Activated T-helper 2 cell treated with anti-CD3 and anti-CD28 coated beads, Interferon-gamma antibody, Interleukin-2, Interleukin-4, amounts not matched to agents 10 μg/mL and 5 μg/mL and 100 μg/mL, durations not matched to agents 14 hours and 24 hours and 36 hours (primary cell): ENCODE measurements at regions of chr17 and their contacts with region 1.

Region 1: DNA sequence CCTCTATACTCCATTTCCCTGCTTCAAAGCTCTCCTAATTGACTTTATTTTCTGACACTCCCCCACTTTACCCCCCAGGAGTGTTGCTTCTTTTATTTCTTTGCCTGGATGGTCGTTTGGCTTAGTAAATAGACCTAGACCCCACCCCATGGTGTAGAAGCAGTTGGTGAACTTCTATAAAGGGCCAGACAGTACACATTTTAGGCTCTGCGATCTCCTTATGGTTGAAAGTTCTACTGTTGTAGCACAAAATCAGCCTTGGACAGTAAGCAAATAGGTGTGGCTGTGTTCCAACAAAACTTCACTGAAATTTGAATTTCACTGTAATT is 31.9 kb downstream of the ZNF287 start:
- DNase-seq: no peak
- H3K4me3 Mint-ChIP-seq: peak overlapping the region; percentile 90
- H3K27ac Mint-ChIP-seq: no peak overlapping the region
- H3K4me1 Mint-ChIP-seq: peaks cover 15% of the 10 kb centered on the region
- H3K27me3 Mint-ChIP-seq: peaks cover 2% of the 10 kb centered on the region

Region 2: GRCh38 chr17:16438557-16439302 is 98.4 kb before region 1 on chr17:
- intact Hi-C with region 1: loop called (anchors 5 kb)
- DNase-seq: peak; percentile 95
- H3K4me3 Mint-ChIP-seq: peak overlapping the region; percentile 98
- H3K27ac Mint-ChIP-seq: peak overlapping the region; percentile 94
- H3K4me1 Mint-ChIP-seq: peaks cover 27% of the 10 kb centered on the region
- H3K27me3 Mint-ChIP-seq: no peaks in the 10 kb centered on the region

Region 3: DNA sequence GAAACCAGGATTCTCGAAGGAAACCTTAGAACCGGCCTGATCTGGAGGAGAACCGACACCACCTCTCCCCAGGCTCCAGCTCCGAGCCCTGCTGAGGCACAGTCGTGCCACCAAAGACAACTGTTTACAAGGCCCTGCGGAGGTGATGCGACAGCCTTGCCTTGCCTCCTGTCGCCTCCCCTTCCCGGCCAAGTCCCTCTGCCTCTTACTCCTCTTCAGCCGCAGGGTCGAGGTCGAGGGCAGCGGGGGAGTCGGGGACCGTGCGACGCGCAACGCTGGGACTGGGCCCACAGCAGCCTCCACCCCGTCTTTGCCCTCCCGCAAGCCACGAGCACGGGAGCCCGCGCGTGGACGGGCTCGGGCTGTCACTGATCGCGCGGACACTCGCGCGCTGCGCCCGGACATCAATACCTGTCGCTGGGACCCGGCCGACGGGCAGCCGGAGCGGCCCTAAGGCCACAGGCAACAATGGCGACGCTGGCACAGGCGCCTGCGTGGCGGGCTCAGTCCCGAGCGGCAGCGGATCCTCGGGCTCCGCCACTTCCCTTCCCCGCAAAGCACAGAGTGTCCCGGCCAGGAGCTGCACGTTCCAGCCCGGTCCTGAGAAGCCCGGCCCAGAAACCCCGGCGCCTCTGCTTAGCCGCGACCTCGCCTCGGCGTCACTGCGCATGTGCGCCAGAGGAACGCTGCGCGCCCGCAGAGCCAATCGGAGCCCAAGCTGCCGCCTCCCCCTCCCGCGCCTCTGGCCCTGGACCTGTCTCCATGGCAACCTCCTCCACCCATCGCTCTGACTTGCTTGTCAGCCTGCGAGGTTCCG is 31.7 kb after region 1 on chr17 and contains the start of gene ZNF287:
- intact Hi-C with region 1: loop called (anchors 1 kb)
- DNase-seq: peak; percentile 90
- H3K4me3 Mint-ChIP-seq: peak within 1 kb of the TSS; percentile 78
- H3K27ac Mint-ChIP-seq: peak within 1 kb of the TSS; percentile 43
- H3K4me1 Mint-ChIP-seq: peaks cover 2% of the 10 kb centered on the region
- H3K27me3 Mint-ChIP-seq: no peaks in the 10 kb centered on the region
- total RNA-seq, gene ZNF287: 6.0 and 7.9 TPM in 2 replicates

Region 4: DNA sequence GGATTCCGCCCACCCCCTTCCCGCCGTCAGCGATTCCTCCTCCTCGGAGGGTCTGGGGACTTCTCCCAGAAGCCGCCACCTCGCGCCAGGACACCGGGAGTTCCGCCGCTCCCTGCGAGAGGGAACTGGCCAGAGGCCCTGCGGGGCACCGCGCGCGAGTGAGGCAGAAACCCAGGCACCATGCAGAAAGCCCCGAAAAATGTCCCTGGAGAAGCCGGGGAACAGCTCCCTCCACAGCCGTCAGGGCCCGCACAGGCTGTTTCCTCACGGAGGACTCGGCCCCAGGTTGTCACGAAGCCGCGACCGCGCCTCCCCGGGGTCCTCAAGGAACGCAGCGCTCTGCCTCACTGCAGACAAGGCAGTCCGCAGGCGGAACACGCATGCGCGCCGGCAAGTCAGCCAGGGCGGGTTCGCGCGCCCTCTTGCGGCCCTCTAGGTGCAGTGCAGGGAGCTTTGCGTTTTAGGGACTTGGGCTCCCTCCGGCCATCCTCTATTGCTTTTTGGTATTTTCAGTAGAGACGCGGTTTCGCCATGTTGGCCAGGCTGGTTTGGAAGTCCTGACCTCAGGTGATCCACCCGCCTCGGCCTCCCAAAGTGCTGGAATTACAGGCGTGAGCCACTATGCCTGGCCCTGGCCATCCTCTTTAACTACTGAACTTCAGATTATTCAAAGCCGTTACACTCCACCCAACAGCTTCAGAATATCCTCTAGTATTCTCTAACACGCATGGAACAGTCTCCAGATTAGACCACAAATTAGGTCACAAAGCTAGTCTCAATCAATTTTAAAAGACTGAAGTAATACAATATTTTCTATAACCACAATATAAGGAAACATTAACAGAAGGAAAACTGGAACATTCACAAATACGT is 52.2 kb after region 1 on chr17:
- intact Hi-C with region 1: loop called (anchors 1 kb)
- DNase-seq: peak; percentile 87
- H3K4me3 Mint-ChIP-seq: peak overlapping the region; percentile 66
- H3K27ac Mint-ChIP-seq: no peak overlapping the region
- H3K4me1 Mint-ChIP-seq: peaks cover 5% of the 10 kb centered on the region
- H3K27me3 Mint-ChIP-seq: peaks cover 49% of the 10 kb centered on the region

Region 5: GRCh38 chr17:16653209-16654041 is 116.3 kb after region 1 on chr17 and contains the start of gene ZNF624:
- intact Hi-C with region 1: loop called (anchors 1 kb)
- DNase-seq: peak; percentile 82
- H3K4me3 Mint-ChIP-seq: peak within 1 kb of the TSS; percentile 86
- H3K27ac Mint-ChIP-seq: peak within 1 kb of the TSS; percentile 31
- H3K4me1 Mint-ChIP-seq: peaks cover 11% of the 10 kb centered on the region
- H3K27me3 Mint-ChIP-seq: peaks cover 10% of the 10 kb centered on the region
- total RNA-seq, gene ZNF624: 2.8 and 4.9 TPM in 2 replicates